ENCODE measurements at regions of chr5 and their contacts with region 1.

Region 1: GRCh38 chr5:173536312-173536641 is 80.2 kb downstream of the BOD1 start:
- DNase-seq: peak; percentile 48
- ATAC-seq: peak; percentile 74
- H3K4me3 ChIP-seq: no peak overlapping the region
- H3K27ac ChIP-seq: no peak overlapping the region
- H3K4me1 ChIP-seq: no peaks in the 10 kb centered on the region; the same call in 1 of the 2 replicates
- H3K27me3 ChIP-seq: 0 out of 2 replicates have a peak, but pooled peaks cover under 1% of the 10 kb centered on the region
- CTCF ChIP-seq: no peak
- POLR2A ChIP-seq: no peak
- RAD21 ChIP-seq: no peak

Region 2: GRCh38 chr5:173554038-173554954 is 18.0 kb after region 1 on chr5:
- CTCF ChIA-PET with region 1: no interaction called
- POLR2A ChIA-PET with region 1: no interaction called
- dilution Hi-C with region 1: no loop called
- in situ Hi-C with region 1: no loop called
- intact Hi-C with region 1: loop called (anchors 2 kb)
- DNase-seq: no peak
- ATAC-seq: no peak
- H3K4me3 ChIP-seq: no peak overlapping the region
- H3K27ac ChIP-seq: no peak overlapping the region
- H3K4me1 ChIP-seq: peaks cover 4% of the 10 kb centered on the region
- H3K27me3 ChIP-seq: peaks cover 2% of the 10 kb centered on the region; the same call in 1 of the 2 replicates
- CTCF ChIP-seq: no peak
- POLR2A ChIP-seq: no peak
- RAD21 ChIP-seq: no peak

Region 3: GRCh38 chr5:174755103-174755502 is 1218.8 kb after region 1 on chr5:
- CTCF ChIA-PET with region 1: no interaction called
- POLR2A ChIA-PET with region 1: no interaction called
- dilution Hi-C with region 1: no loop called
- in situ Hi-C with region 1: no loop called
- intact Hi-C with region 1: no loop called
- DNase-seq: peak; percentile 22
- ATAC-seq: peak; percentile 42
- H3K4me3 ChIP-seq: no peak overlapping the region
- H3K27ac ChIP-seq: no peak overlapping the region
- H3K4me1 ChIP-seq: no peaks in the 10 kb centered on the region; the same call in 1 of the 2 replicates
- H3K27me3 ChIP-seq: peaks cover 7% of the 10 kb centered on the region
- CTCF ChIP-seq: peak; percentile 48
- POLR2A ChIP-seq: no peak
- RAD21 ChIP-seq: peak; percentile 36

Measured in IMR-90 (cell line).